K562 (cell line): ENCODE measurements at regions of chr4 and their contacts with region 1.

Region 1: GRCh38 chr4:138870737-138871554 is 144.6 kb upstream of the NOCT start:
- DNase-seq: peak; percentile 58 to 78 (median 60)
- ATAC-seq: peak; percentile 86
- H3K4me3 ChIP-seq: no peak overlapping the region
- H3K27ac ChIP-seq: no peak overlapping the region
- H3K4me1 ChIP-seq: no peaks in the 10 kb centered on the region; a peak in 1 of 5 replicates
- H3K27me3 ChIP-seq: peaks cover 12 to 29% of the 10 kb centered on the region in 2 experiments
- CTCF ChIP-seq: peak; percentile 76 to 89 (median 80)
- EP300 ChIP-seq: no peak
- POLR2A ChIP-seq: no peak
- RAD21 ChIP-seq: peak; percentile 86 to 87

Region 2: DNA sequence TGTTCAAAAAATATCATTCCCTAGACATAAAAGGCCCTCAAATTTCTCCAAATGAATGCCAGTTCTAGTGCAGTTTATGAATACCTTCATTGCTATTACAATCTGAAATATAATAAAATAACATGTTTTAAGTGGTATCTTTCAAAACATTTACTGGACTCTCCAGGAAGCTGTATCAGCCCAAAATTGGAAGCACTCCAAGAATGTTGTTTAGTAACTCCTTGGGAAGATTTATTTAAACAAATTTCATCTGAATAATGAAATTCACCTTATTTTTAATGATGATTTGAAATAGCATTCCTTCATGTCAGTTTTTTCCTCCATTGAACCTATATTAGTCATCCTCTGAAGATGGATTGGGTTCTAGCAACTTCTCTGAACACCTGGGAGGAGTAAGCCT is 1121.5 kb before region 1 on chr4:
- CTCF ChIA-PET with region 1: no interaction called
- POLR2A ChIA-PET with region 1: no interaction called
- in situ Hi-C with region 1: loop called (anchors 25 kb)
- intact Hi-C with region 1: no loop called
- DNase-seq: no peak
- ATAC-seq: no peak
- H3K4me3 ChIP-seq: no peak overlapping the region
- H3K27ac ChIP-seq: no peak overlapping the region
- H3K4me1 ChIP-seq: no peaks in the 10 kb centered on the region
- H3K27me3 ChIP-seq: no peaks in the 10 kb centered on the region
- CTCF ChIP-seq: no peak
- EP300 ChIP-seq: no peak
- POLR2A ChIP-seq: no peak
- RAD21 ChIP-seq: no peak

Region 3: GRCh38 chr4:138035781-138036258 is 835.1 kb before region 1 on chr4:
- CTCF ChIA-PET with region 1: interaction called, 3 read pairs
- POLR2A ChIA-PET with region 1: no interaction called
- in situ Hi-C with region 1: loop called (anchors 25 kb)
- intact Hi-C with region 1: loop called (anchors 2 kb)
- DNase-seq: peak; percentile 22 to 62 (median 36)
- ATAC-seq: peak; percentile 97
- H3K4me3 ChIP-seq: no peak overlapping the region
- H3K27ac ChIP-seq: no peak overlapping the region
- H3K4me1 ChIP-seq: no peaks in the 10 kb centered on the region
- H3K27me3 ChIP-seq: no peaks in the 10 kb centered on the region
- CTCF ChIP-seq: peak; percentile 49 to 74 (median 60); a peak in 5 of 6 replicates
- EP300 ChIP-seq: no peak
- POLR2A ChIP-seq: no peak
- RAD21 ChIP-seq: peak; percentile 75 to 80

Region 4: DNA sequence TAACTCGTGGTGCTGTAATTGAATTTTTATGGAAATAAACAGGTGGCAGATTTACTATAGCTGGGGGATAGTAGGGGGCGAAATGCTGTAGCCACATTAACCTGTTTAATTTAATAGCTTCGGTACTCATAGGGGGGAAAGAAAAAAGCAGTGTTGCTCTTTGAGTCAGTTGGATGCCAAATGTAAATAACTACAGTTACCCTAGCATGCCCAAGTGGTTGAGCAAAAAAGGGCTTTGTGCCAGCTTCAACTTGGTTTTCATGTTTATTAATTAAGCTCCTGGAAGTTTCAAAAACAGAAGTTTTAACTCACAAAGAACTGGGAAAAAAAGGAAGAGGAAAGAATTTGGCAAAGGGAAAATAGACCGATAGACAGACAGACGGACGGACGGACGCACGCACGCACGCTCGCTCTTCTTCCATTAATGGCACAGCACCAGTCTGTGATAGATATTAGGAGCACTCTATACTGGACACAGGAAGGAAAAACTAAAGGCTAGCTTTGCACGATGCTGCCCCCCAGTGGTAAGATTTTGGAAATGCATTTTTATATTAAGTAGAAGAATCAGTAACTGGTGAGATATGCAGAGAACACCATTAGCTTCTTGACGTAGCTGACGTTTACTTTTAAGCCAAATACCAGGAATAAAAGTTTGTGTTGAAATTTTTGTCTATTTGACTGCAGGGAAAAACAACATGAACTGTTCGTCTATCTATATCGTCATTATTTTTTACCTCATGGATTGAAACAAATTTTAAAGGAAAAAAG is 780.6 kb before region 1 on chr4:
- CTCF ChIA-PET with region 1: no interaction called
- POLR2A ChIA-PET with region 1: no interaction called
- in situ Hi-C with region 1: no loop called
- intact Hi-C with region 1: loop called (anchors 5 kb)
- DNase-seq: peak; percentile 60 to 72 (median 64)
- ATAC-seq: peak; percentile 91
- H3K4me3 ChIP-seq: no peak overlapping the region
- H3K27ac ChIP-seq: no peak overlapping the region
- H3K4me1 ChIP-seq: no peaks in the 10 kb centered on the region
- H3K27me3 ChIP-seq: no peaks in the 10 kb centered on the region; a peak in 1 of 5 replicates
- CTCF ChIP-seq: peak; percentile 60 to 79 (median 72)
- EP300 ChIP-seq: no peak
- POLR2A ChIP-seq: no peak
- RAD21 ChIP-seq: peak; percentile 48 to 76

Region 5: GRCh38 chr4:138562544-138562991 is 308.4 kb before region 1 on chr4:
- CTCF ChIA-PET with region 1: no interaction called
- POLR2A ChIA-PET with region 1: no interaction called
- in situ Hi-C with region 1: no loop called
- intact Hi-C with region 1: loop called (anchors 5 kb)
- DNase-seq: no peak
- ATAC-seq: no peak
- H3K4me3 ChIP-seq: no peak overlapping the region
- H3K27ac ChIP-seq: no peak overlapping the region
- H3K4me1 ChIP-seq: peaks cover 0 to 3% of the 10 kb centered on the region in 2 experiments; a peak in 3 of 5 replicates
- H3K27me3 ChIP-seq: no peaks in the 10 kb centered on the region
- CTCF ChIP-seq: no peak
- EP300 ChIP-seq: no peak
- POLR2A ChIP-seq: no peak
- RAD21 ChIP-seq: no peak

Region 6: GRCh38 chr4:138919094-138919936 is 48.4 kb after region 1 on chr4:
- CTCF ChIA-PET with region 1: no interaction called
- POLR2A ChIA-PET with region 1: interaction called, 5 read pairs
- in situ Hi-C with region 1: no loop called
- intact Hi-C with region 1: loop called (anchors 1 kb)
- DNase-seq: peak; percentile 71 to 85 (median 80)
- ATAC-seq: peak; percentile 96
- H3K4me3 ChIP-seq: no peak overlapping the region
- H3K27ac ChIP-seq: no peak overlapping the region
- H3K4me1 ChIP-seq: no peaks in the 10 kb centered on the region; a peak in 2 of 5 replicates
- H3K27me3 ChIP-seq: no peaks in the 10 kb centered on the region
- CTCF ChIP-seq: peak; percentile 83 to 93 (median 93)
- EP300 ChIP-seq: no peak
- POLR2A ChIP-seq: no peak
- RAD21 ChIP-seq: peak; percentile 82 to 85

Region 7: DNA sequence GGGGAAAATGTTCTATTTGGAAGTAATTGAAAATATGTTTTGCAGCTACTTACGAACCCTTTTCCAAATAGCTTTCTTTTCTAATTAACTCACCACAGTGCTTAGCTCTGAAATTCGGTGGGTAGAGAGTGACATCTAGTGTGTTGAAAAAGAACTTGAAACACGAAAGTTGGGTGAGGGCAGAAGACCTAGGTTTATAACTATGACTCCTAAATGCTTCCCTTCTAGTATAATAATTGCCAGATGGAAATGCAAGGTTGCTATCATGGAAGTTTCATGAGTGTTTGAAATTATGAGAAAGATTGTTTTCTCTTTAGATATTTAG is 67.4 kb after region 1 on chr4:
- CTCF ChIA-PET with region 1: no interaction called
- POLR2A ChIA-PET with region 1: no interaction called
- in situ Hi-C with region 1: no loop called
- intact Hi-C with region 1: loop called (anchors 5 kb)
- DNase-seq: peak in 2 of 4 experiments; percentile 31 to 61
- ATAC-seq: peak; percentile 96
- H3K4me3 ChIP-seq: no peak overlapping the region
- H3K27ac ChIP-seq: no peak overlapping the region
- H3K4me1 ChIP-seq: no peaks in the 10 kb centered on the region
- H3K27me3 ChIP-seq: no peaks in the 10 kb centered on the region
- CTCF ChIP-seq: peak; percentile 49 to 72 (median 55); a peak in 4 of 6 replicates
- EP300 ChIP-seq: no peak
- POLR2A ChIP-seq: no peak
- RAD21 ChIP-seq: peak; percentile 60 to 72